ENCODE measurements at regions of chr12 and their contacts with region 1.

Region 1: GRCh38 chr12:110577717-110578521 is 5.2 kb downstream of the PPTC7 start:
- DNase-seq: peak; percentile 64
- H3K4me3 Mint-ChIP-seq: peak overlapping the region; percentile 94
- H3K27ac Mint-ChIP-seq: peak overlapping the region; percentile 98
- H3K4me1 Mint-ChIP-seq: peaks cover 77% of the 10 kb centered on the region
- H3K27me3 Mint-ChIP-seq: no peaks in the 10 kb centered on the region

Region 2: DNA sequence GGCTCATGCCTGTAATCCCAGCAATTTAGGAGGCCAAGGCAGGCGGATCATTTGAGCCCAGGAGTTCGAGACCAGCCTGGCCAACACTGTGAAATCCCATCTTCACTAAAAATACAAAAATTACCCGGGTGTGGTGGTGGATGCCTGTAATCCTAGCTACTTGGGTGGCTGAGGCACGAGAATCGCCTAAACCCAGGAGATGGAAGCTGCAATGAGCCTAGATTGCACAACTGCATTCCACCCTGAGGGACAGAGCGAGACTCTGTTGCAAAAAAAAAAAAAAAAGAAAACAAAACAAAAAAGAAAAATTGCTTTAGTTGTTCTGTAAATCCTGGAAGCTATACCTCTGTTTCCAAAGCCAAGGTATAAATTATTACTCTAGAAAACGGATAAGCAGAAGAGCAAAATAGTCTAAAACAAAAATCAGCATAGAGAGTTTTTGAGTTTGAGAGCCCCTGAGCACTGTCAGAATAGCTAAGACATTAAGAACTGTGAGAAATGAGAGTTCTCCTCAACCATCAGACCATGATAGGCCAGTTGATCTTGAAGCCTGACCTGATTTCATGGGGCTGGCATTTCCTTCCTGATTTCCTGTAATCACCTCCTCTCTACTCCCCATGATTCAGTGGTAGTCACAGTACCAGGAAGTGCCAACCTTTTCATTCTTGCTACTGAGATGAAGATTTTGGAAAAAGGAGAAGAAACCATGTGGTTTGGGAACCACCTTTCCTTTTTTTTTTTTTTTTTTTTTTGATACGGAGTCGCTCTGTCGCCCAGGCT is 265.1 kb before region 1 on chr12:
- CTCF ChIA-PET with region 1: no interaction called
- POLR2A ChIA-PET with region 1: no interaction called
- intact Hi-C with region 1: loop called (anchors 10 kb)
- DNase-seq: peak; percentile 39
- H3K4me3 Mint-ChIP-seq: no peak overlapping the region
- H3K27ac Mint-ChIP-seq: peak overlapping the region; percentile 85
- H3K4me1 Mint-ChIP-seq: peaks cover 61% of the 10 kb centered on the region
- H3K27me3 Mint-ChIP-seq: no peaks in the 10 kb centered on the region

Region 3: DNA sequence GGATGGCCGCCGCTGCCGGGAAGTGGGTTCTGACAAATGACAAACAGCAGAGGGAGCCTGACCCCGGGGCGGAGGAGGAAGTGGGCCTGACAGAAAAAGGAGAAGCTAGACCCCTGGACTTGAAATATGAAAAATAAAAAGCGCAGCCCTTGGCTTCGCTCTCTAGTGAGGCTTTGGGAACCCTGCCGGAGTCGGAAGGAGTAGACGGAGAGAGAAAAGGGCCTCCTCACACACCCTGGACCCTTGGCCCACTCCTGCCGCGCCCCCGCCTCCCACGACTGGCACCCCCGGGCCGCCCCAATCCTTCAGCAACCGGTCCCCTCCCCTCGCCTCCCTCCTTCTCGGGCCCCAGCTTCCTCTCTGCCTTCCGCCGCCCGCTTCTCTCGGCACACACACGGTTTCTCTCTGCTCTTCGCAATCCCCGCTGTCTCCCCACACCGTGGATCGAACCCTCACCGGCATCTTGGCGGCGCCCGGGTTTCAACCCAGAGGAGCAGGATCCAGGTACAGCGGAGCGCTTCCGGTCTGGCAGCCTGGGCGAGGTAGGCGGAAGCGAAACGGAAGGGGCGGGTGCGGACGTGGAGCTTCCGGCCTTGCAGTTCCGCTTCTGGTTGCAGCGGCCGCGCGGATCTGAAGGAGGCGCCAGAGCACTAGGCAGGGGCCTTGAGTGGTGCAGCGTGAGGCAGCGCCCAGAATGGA is 128.0 kb before region 1 on chr12 and contains the start of gene ARPC3:
- CTCF ChIA-PET with region 1: no interaction called
- POLR2A ChIA-PET with region 1: no interaction called
- intact Hi-C with region 1: no loop called
- DNase-seq: peak; percentile 97
- H3K4me3 Mint-ChIP-seq: peak within 1 kb of the TSS; percentile 100
- H3K27ac Mint-ChIP-seq: peak within 1 kb of the TSS; percentile 99
- H3K4me1 Mint-ChIP-seq: peaks cover 35% of the 10 kb centered on the region
- H3K27me3 Mint-ChIP-seq: no peaks in the 10 kb centered on the region
- total RNA-seq, gene ARPC3: 340 to 352 TPM

Region 4: DNA sequence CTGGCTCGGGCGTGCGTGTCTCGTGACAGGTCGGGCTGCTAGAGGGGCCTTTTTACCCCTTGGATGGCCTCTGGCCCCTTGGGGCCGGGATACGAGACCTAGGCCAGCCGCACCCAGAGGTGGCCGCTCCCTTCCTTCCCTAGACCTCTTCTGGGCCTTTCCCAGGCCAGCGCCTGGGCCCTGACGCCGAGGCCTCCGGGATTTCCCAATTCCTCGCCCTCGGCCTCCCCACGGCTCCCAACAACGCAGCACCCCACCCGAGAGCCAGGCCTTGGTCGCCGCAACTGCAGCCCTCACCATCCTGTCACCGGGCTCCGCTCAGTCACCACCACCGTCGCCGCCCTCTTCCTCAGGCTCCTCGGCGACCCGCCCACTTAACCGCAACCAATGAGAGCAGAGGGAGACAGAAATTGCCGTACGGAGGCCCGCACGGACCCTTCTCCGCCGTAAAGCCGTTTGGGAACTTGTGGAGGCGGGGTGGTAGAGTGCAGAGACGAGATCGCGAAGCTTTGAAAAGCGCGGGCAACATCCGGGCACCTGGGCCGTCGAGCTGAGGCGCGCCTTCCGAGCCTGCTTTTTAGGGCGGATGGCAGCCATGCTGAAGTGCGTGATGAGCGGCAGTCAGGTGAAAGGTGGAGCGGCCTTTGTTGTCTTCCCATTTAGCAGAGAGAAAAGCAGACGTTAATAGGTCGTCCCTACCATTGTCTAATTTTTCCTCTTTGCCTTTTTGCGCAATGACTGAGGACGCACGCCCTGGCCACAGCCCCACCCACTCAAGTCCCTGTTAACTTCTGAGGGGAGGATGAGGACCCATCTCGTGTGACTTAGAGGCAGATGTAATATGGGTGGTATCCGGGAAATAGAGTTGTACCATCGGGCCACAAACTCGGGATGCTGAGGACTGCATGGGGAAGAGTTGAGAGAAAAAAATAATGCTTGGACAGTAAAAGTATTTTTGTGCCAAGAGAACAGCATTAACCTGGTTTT is 75.9 kb before region 1 on chr12 and contains the starts of genes RAD9B and VPS29:
- CTCF ChIA-PET with region 1: no interaction called
- POLR2A ChIA-PET with region 1: no interaction called
- intact Hi-C with region 1: loop called (anchors 1 kb)
- DNase-seq: peak; percentile 100
- H3K4me3 Mint-ChIP-seq: peak within 1 kb of the TSS; percentile 99
- H3K27ac Mint-ChIP-seq: peak within 1 kb of the TSS; percentile 97
- H3K4me1 Mint-ChIP-seq: peaks cover 30% of the 10 kb centered on the region
- H3K27me3 Mint-ChIP-seq: no peaks in the 10 kb centered on the region
- total RNA-seq, gene RAD9B: 1.1 to 2.7 TPM
- total RNA-seq, gene VPS29: 100 to 106 TPM

Region 5: GRCh38 chr12:110590806-110591326 is 12.9 kb after region 1 on chr12:
- CTCF ChIA-PET with region 1: no interaction called
- POLR2A ChIA-PET with region 1: interaction called, 26 read pairs
- intact Hi-C with region 1: loop called (anchors 1 kb)
- DNase-seq: peak; percentile 7
- H3K4me3 Mint-ChIP-seq: peak overlapping the region; percentile 55
- H3K27ac Mint-ChIP-seq: peak overlapping the region; percentile 93
- H3K4me1 Mint-ChIP-seq: peaks cover 25% of the 10 kb centered on the region
- H3K27me3 Mint-ChIP-seq: no peaks in the 10 kb centered on the region

Region 6: DNA sequence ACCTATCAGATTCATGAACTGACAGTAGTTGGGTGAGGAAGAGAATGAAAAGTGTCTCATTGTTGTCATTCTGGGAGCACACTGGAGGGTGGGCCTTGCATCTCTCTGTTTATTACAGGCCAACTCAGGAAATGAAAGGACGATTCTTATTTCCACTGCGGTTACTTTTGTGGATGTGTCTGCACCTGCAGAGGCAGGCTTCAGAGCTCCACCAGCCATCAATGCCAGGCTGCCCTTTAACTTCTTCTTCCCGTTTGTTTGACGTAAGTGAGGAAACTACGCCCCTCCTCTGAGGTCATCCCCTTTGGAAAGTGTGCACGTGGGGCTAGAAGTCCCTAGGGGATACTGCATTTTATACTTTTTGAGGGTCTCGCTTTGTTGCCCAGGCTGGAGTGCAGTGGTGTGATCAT is 69.7 kb after region 1 on chr12:
- CTCF ChIA-PET with region 1: no interaction called
- POLR2A ChIA-PET with region 1: no interaction called
- intact Hi-C with region 1: no loop called
- DNase-seq: peak; percentile 31
- H3K4me3 Mint-ChIP-seq: no peak overlapping the region
- H3K27ac Mint-ChIP-seq: peak overlapping the region; percentile 11
- H3K4me1 Mint-ChIP-seq: peaks cover 16% of the 10 kb centered on the region
- H3K27me3 Mint-ChIP-seq: no peaks in the 10 kb centered on the region

Region 7: DNA sequence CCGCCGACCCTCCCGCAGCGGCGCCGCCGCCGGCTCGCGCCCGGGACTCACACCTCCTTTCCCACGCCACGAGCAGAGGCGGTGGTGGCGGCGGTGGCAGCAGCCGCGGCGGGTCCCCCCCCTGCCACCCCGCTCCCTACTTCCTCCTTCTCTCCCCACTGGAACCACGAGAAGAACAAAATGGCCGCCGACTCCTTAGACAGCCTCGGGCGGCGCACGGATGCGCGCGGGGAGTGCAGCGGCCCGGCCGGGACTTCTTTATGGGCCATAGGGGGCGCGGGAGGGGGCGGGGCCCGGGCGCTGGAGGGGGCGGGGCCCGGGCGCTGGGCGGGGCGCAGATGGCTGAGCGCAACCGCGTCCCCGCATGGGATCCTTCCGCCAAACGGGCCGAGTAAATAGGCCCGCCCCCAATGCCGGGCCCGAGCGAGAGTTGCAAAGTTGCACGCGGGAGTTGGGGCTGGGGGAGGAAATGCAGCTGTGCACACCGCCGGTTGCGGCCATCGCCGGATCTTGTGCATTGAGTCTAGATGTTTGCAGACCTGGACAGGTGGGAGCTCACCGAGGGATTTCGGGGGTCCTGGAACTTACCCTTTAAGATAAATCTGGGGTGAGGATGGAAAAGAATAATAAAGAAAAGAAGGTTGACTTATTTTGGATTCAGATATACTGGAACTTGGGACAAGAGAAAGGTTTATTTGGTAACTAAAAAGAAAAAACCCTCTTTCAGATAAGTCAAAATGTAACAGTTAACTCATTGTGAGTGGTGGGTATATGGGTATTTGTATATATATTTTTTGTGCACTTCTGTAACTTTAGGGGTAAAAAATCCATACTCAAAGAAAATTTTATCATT is 165.0 kb after region 1 on chr12 and contains the start of gene PPP1CC:
- CTCF ChIA-PET with region 1: no interaction called
- POLR2A ChIA-PET with region 1: no interaction called
- intact Hi-C with region 1: loop called (anchors 1 kb)
- DNase-seq: peak; percentile 94
- H3K4me3 Mint-ChIP-seq: peak within 1 kb of the TSS; percentile 99
- H3K27ac Mint-ChIP-seq: peak within 1 kb of the TSS; percentile 99
- H3K4me1 Mint-ChIP-seq: peaks cover 34% of the 10 kb centered on the region
- H3K27me3 Mint-ChIP-seq: no peaks in the 10 kb centered on the region
- total RNA-seq, gene PPP1CC: 334 to 343 TPM

Region 8: GRCh38 chr12:110853836-110854235 is 275.9 kb after region 1 on chr12:
- CTCF ChIA-PET with region 1: no interaction called
- POLR2A ChIA-PET with region 1: no interaction called
- intact Hi-C with region 1: no loop called
- DNase-seq: no peak
- H3K4me3 Mint-ChIP-seq: no peak overlapping the region
- H3K27ac Mint-ChIP-seq: no peak overlapping the region
- H3K4me1 Mint-ChIP-seq: no peaks in the 10 kb centered on the region
- H3K27me3 Mint-ChIP-seq: peaks cover 11% of the 10 kb centered on the region

Region 9: DNA sequence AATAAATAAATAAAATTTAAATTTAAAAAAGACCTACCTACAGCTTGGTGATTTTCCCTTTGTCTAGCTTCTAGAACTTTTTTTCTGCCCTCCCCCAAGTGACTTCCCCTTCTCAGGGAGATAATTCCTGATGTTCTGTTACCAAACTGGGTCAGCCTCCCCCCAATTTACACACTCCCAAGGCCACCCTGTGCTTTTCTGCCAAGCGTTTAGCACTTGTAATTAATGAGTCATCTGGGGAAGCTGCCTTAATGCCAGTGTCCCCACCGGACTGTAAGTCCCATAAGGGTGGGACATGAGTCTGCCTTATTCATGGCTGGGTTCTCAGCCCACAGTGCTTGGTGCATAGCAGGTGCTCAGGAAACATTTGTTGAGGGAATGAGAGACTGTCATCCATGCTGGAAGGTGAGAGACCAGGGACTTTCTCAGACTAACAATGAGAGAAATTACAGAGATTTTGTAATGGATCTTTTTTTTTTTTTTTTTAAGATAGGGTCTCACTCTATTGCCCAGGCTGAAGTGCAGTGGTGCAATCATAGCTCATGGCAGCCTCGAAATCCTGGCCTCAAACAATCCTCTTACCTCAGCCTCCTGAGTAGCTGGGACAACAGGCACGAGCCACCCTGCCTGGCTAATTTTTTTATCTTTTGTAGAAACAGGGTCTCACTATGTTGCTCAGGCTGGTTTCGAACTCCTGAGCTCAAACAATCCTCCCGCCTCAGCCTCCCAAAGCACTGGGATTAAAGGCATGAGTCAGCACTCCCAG is 684.2 kb after region 1 on chr12:
- CTCF ChIA-PET with region 1: no interaction called
- POLR2A ChIA-PET with region 1: no interaction called
- intact Hi-C with region 1: no loop called
- DNase-seq: no peak
- H3K4me3 Mint-ChIP-seq: no peak overlapping the region
- H3K27ac Mint-ChIP-seq: no peak overlapping the region
- H3K4me1 Mint-ChIP-seq: no peaks in the 10 kb centered on the region
- H3K27me3 Mint-ChIP-seq: peaks cover 2% of the 10 kb centered on the region